Activated CD4-positive, alpha-beta memory T cell treated with anti-CD3 and anti-CD28 coated beads, Interleukin-2, amount 10 ng/mL, durations not matched to agents 7 days and 5 days (primary cell): ENCODE measurements at regions of chr21 and their contacts with region 1.

Region 1: GRCh38 chr21:42654109-42654912 is 890 bp downstream of the PDE9A start:
- DNase-seq: no peak
- H3K4me3 Mint-ChIP-seq: peak overlapping the region; percentile 64
- H3K27ac Mint-ChIP-seq: no peak overlapping the region
- H3K4me1 Mint-ChIP-seq: peaks cover 15% of the 10 kb centered on the region
- H3K27me3 Mint-ChIP-seq: peaks cover 47% of the 10 kb centered on the region

Region 2: DNA sequence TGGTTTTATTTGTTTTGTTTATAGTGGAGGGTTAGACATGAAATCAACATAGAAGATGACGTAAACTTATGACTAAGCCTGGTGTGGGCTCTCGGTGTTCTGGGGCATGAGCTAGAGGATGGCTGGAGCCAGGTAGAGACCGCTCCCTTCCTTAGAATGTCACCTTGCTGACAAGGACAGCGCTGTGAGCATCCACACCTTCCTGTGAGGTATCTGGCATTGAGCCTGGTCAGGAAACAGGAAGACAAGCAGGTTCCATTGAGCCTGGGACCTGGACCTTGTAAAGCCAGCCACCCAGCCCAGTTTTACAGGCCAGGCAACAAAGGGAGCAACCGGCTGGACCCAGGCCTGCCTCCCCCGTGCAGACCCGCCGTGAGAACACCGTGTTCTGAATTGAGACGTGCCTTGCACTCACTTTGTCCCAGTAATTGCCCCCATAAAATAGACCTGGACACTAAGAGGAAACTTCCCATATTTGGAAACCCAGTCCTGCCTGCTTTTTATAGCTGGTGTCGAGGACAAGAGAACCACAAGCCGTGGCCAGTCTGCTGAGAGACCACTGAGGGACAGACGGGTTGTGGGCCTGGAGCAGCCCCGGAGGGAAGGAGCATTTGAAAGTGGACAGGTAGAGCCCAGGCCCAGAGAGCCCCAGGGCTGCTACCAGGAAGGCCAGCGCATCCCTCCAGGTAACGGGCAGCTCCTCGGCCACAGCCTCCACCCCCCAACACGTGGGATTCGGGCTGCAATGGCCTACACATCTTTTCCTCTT is 77.1 kb after region 1 on chr21:
- CTCF ChIA-PET with region 1: no interaction called
- POLR2A ChIA-PET with region 1: no interaction called
- DNase-seq: no peak
- H3K4me3 Mint-ChIP-seq: no peak overlapping the region
- H3K27ac Mint-ChIP-seq: no peak overlapping the region
- H3K4me1 Mint-ChIP-seq: peaks cover 44% of the 10 kb centered on the region
- H3K27me3 Mint-ChIP-seq: peaks cover 15% of the 10 kb centered on the region

Region 3: DNA sequence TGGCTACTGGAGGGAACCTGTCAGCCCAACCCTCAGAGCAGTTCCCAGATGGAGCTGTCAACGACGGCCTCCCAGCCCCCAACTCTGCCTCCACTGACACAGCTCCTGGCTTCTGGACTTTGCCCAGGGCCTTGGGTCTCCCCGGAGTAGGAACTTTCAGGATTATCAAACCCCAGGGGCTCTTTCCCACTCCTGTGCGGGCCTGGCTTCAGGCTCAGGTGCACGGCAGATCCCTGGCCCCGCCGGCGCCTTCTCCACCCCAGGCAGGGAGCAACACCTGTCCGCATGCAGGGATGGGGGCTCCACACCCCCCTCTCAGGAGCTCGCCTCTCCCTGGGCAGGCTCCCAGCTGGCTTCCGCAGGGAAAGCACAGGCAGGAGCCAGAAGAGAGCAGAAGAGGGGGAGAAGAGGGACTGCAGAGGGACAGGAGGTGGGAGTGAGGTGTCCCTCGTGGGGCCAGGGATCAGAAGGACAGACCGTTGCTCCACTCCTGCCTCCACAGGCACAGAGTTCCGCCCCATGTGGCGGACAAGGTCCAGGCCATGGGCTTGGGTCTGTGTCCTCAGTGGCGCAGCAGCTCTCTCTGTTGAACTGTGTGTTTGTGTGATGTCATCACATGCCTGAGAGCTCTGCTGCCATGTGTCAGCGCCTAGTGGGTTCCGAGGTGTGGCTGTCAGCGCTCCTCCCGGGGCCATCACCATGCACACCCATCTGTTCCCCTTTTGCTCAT is 106.8 kb after region 1 on chr21:
- CTCF ChIA-PET with region 1: no interaction called
- POLR2A ChIA-PET with region 1: no interaction called
- DNase-seq: no peak
- H3K4me3 Mint-ChIP-seq: no peak overlapping the region
- H3K27ac Mint-ChIP-seq: no peak overlapping the region
- H3K4me1 Mint-ChIP-seq: no peaks in the 10 kb centered on the region
- H3K27me3 Mint-ChIP-seq: no peaks in the 10 kb centered on the region

Region 4: DNA sequence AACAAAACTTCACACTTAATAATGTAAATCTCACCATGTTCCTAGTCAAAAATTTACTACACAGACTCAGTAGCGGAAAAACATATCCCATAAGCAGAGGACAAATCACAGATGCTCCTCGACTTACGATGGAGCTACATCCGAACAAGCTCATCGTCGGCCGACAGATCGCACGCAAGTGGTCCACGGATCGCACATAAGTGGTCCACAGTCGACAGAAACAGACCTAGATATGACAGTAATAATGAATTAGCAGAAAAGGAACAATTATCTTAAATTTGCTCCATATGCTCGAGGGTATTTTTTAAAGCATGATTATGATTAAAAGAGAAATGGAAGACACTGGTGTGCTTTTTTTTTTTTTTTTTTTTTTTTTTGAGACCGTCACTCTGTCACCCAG is 188.7 kb after region 1 on chr21:
- CTCF ChIA-PET with region 1: interaction called, 10 read pairs
- POLR2A ChIA-PET with region 1: no interaction called
- DNase-seq: no peak
- H3K4me3 Mint-ChIP-seq: no peak overlapping the region
- H3K27ac Mint-ChIP-seq: no peak overlapping the region
- H3K4me1 Mint-ChIP-seq: no peaks in the 10 kb centered on the region
- H3K27me3 Mint-ChIP-seq: no peaks in the 10 kb centered on the region